Activated CD8-positive, alpha-beta memory T cell treated with anti-CD3 and anti-CD28 coated beads, Interleukin-2, amount 10 ng/mL, durations not matched to agents 7 days and 5 days (primary cell): ENCODE measurements at regions of chr6 and their contacts with region 1.

Region 1: GRCh38 chr6:34196126-34196830 is 40.4 kb upstream of the HMGA1 start:
- DNase-seq: peak; percentile 87
- ATAC-seq: peak; percentile 99
- H3K4me3 Mint-ChIP-seq: peak overlapping the region; percentile 76
- H3K27ac Mint-ChIP-seq: peak overlapping the region; percentile 28
- H3K4me1 Mint-ChIP-seq: peaks cover 6% of the 10 kb centered on the region
- H3K27me3 Mint-ChIP-seq: peaks cover 14% of the 10 kb centered on the region

Region 2: DNA sequence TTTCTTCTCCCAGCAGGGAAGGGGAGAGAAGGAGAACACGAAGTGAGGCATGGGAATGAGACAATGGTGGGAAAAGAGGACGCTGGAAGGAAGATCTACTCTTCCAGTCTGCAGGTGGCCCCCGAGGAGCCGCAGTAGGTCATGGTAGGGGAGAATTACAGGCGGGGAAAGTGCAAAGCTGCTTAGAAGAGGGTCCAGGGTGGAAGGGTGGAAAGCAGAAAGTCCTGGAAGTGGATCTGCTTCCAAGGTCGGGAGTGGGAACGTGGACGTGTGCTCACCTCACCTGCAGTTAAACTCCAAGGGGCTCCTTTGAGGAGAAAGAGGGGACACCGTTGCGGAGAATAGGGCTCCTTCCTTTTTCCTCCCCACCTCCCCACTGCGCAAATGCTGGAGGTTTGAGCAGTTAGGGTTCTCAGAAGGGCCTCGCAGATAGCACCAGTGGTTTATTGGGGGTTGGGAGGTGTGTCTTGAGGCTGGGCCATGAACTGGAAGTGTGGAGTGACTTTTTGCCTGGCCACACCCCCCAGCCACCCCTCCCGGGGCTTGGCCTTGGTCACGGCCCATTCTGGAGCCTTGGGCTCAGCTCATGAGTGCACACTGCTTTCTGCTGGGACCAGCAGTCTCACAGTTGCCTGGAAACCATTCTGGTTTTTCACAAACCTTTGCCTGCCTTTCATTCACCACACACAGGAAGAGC is 292.1 kb before region 1 on chr6:
- CTCF ChIA-PET with region 1: no interaction called
- DNase-seq: peak; percentile 99
- ATAC-seq: peak; percentile 89
- H3K4me3 Mint-ChIP-seq: peak overlapping the region; percentile 82
- H3K27ac Mint-ChIP-seq: peak overlapping the region; percentile 95
- H3K4me1 Mint-ChIP-seq: peaks cover 79% of the 10 kb centered on the region
- H3K27me3 Mint-ChIP-seq: no peaks in the 10 kb centered on the region

Region 3: GRCh38 chr6:34161857-34162515 is 34.3 kb before region 1 on chr6:
- CTCF ChIA-PET with region 1: interaction called, 13 read pairs
- DNase-seq: no peak
- ATAC-seq: no peak
- H3K4me3 Mint-ChIP-seq: no peak overlapping the region
- H3K27ac Mint-ChIP-seq: no peak overlapping the region
- H3K4me1 Mint-ChIP-seq: peaks cover 2% of the 10 kb centered on the region
- H3K27me3 Mint-ChIP-seq: peaks cover 33% of the 10 kb centered on the region

Region 4: GRCh38 chr6:34223956-34224940 is 28.0 kb after region 1 on chr6:
- CTCF ChIA-PET with region 1: interaction called, 19 read pairs
- DNase-seq: peak; percentile 95
- ATAC-seq: peak; percentile 100
- H3K4me3 Mint-ChIP-seq: peak overlapping the region; percentile 54
- H3K27ac Mint-ChIP-seq: peak overlapping the region; percentile 82
- H3K4me1 Mint-ChIP-seq: peaks cover 29% of the 10 kb centered on the region
- H3K27me3 Mint-ChIP-seq: peaks cover 3% of the 10 kb centered on the region

Region 5: GRCh38 chr6:34248727-34249551 is 52.7 kb after region 1 on chr6 and contains the start of gene SMIM29:
- CTCF ChIA-PET with region 1: interaction called, 44 read pairs
- DNase-seq: peak; percentile 98
- ATAC-seq: peak; percentile 92
- H3K4me3 Mint-ChIP-seq: peak within 1 kb of the TSS; percentile 93
- H3K27ac Mint-ChIP-seq: peak within 1 kb of the TSS; percentile 97
- H3K4me1 Mint-ChIP-seq: peaks cover 49% of the 10 kb centered on the region
- H3K27me3 Mint-ChIP-seq: no peaks in the 10 kb centered on the region
- total RNA-seq, gene SMIM29: 34.0 to 41.4 TPM

Region 6: GRCh38 chr6:34414999-34415858 is 219.0 kb after region 1 on chr6:
- CTCF ChIA-PET with region 1: interaction called, 38 read pairs
- DNase-seq: peak; percentile 62
- ATAC-seq: peak; percentile 71
- H3K4me3 Mint-ChIP-seq: no peak overlapping the region
- H3K27ac Mint-ChIP-seq: no peak overlapping the region
- H3K4me1 Mint-ChIP-seq: peaks cover 15% of the 10 kb centered on the region
- H3K27me3 Mint-ChIP-seq: no peaks in the 10 kb centered on the region